Breast epithelium (tissue), 4 donors: ENCODE measurements at regions of chr7 and their contacts with region 1.

Region 1: GRCh38 chr7:157150882-157151281 is 12.2 kb downstream of the UBE3C start:
- DNase-seq: no peak
- H3K4me3 ChIP-seq: peak overlapping the region in 1 of 3 donors; percentile 1
- H3K27ac ChIP-seq: no peak overlapping the region
- H3K4me1 ChIP-seq: no peaks in the 10 kb centered on the region
- H3K27me3 ChIP-seq: no peaks in the 10 kb centered on the region
- CTCF ChIP-seq: no peak
- POLR2A ChIP-seq: no peak

Region 2: GRCh38 chr7:156527458-156527890 is 623.4 kb before region 1 on chr7:
- intact Hi-C with region 1: no loop called
- DNase-seq: no peak
- H3K4me3 ChIP-seq: no peak overlapping the region
- H3K27ac ChIP-seq: no peak overlapping the region
- H3K4me1 ChIP-seq: no peaks in the 10 kb centered on the region
- H3K27me3 ChIP-seq: no peaks in the 10 kb centered on the region
- CTCF ChIP-seq: no peak
- POLR2A ChIP-seq: no peak

Region 3: GRCh38 chr7:157139810-157140510 is 10.9 kb before region 1 on chr7:
- intact Hi-C with region 1: loop called (anchors 1 kb)
- DNase-seq: no peak
- H3K4me3 ChIP-seq: peak overlapping the region; percentile 53 to 94 (median 76)
- H3K27ac ChIP-seq: peak overlapping the region; percentile 92 to 93
- H3K4me1 ChIP-seq: peaks cover 0 to 19% of the 10 kb centered on the region in 2 donors
- H3K27me3 ChIP-seq: no peaks in the 10 kb centered on the region
- CTCF ChIP-seq: no peak
- POLR2A ChIP-seq: no peak